Activated CD4-positive, alpha-beta T cell treated with anti-CD3 and anti-CD28 coated beads for 36 hours (primary cell): ENCODE measurements at regions of chr15 and their contacts with region 1.

Region 1: GRCh38 chr15:81106560-81106959 is 27.5 kb upstream of the CFAP161 start:
- DNase-seq: peak; percentile 59
- ATAC-seq: peak; percentile 57
- H3K4me3 Mint-ChIP-seq: no peak overlapping the region
- H3K27ac Mint-ChIP-seq: no peak overlapping the region
- H3K4me1 Mint-ChIP-seq: peaks cover 4% of the 10 kb centered on the region
- H3K27me3 Mint-ChIP-seq: peaks cover 18% of the 10 kb centered on the region

Region 2: DNA sequence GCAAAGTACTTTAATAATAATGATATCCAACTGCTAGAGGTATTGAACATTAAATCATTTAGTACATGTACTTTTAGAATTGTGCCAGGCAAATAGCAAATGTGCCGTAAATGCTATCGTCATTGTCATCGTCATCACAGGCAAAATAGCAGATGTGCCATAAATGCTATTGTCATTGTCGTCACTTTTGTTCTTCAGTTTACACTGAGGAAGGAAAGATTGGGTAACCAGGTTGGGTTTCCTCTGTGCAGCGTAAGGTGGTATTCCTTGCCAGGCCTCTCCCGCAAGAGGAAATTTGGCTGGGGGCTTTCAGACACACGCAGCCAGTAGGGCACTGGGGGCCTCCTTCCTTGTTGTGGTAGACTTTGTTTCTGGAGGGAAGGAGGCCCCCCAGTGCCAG is 385.1 kb before region 1 on chr15:
- CTCF ChIA-PET with region 1: no interaction called
- POLR2A ChIA-PET with region 1: no interaction called
- intact Hi-C with region 1: no loop called
- DNase-seq: no peak
- ATAC-seq: no peak
- H3K4me3 Mint-ChIP-seq: no peak overlapping the region
- H3K27ac Mint-ChIP-seq: no peak overlapping the region
- H3K4me1 Mint-ChIP-seq: no peaks in the 10 kb centered on the region
- H3K27me3 Mint-ChIP-seq: no peaks in the 10 kb centered on the region

Region 3: GRCh38 chr15:80977627-80978036 is 128.9 kb before region 1 on chr15:
- CTCF ChIA-PET with region 1: interaction called, 6 read pairs
- POLR2A ChIA-PET with region 1: no interaction called
- intact Hi-C with region 1: loop called in 1 of 2 experiments (anchors 1 kb)
- DNase-seq: peak; percentile 70
- ATAC-seq: peak; percentile 79
- H3K4me3 Mint-ChIP-seq: no peak overlapping the region
- H3K27ac Mint-ChIP-seq: peak overlapping the region; percentile 61
- H3K4me1 Mint-ChIP-seq: peaks cover 44% of the 10 kb centered on the region
- H3K27me3 Mint-ChIP-seq: no peaks in the 10 kb centered on the region

Region 4: GRCh38 chr15:81000624-81001151 is 105.9 kb before region 1 on chr15 and contains the start of gene TLNRD1:
- CTCF ChIA-PET with region 1: interaction called, 3 read pairs
- POLR2A ChIA-PET with region 1: no interaction called
- intact Hi-C with region 1: loop called (anchors 1 to 2 kb)
- DNase-seq: peak; percentile 90
- ATAC-seq: peak; percentile 70
- H3K4me3 Mint-ChIP-seq: peak within 1 kb of the TSS; percentile 92
- H3K27ac Mint-ChIP-seq: peak within 1 kb of the TSS; percentile 92
- H3K4me1 Mint-ChIP-seq: peaks cover 45% of the 10 kb centered on the region
- H3K27me3 Mint-ChIP-seq: no peaks in the 10 kb centered on the region
- total RNA-seq, gene TLNRD1: 11.2 to 16.9 TPM

Region 5: GRCh38 chr15:81117136-81117535 is 10.6 kb after region 1 on chr15:
- CTCF ChIA-PET with region 1: interaction called, 12 read pairs
- POLR2A ChIA-PET with region 1: no interaction called
- intact Hi-C with region 1: no loop called
- DNase-seq: no peak
- ATAC-seq: no peak
- H3K4me3 Mint-ChIP-seq: no peak overlapping the region
- H3K27ac Mint-ChIP-seq: no peak overlapping the region
- H3K4me1 Mint-ChIP-seq: no peaks in the 10 kb centered on the region
- H3K27me3 Mint-ChIP-seq: peaks cover 32% of the 10 kb centered on the region

Region 6: GRCh38 chr15:81336568-81336967 is 230.0 kb after region 1 on chr15:
- CTCF ChIA-PET with region 1: no interaction called
- POLR2A ChIA-PET with region 1: no interaction called
- intact Hi-C with region 1: loop called in 1 of 2 experiments (anchors 10 kb)
- DNase-seq: peak; percentile 52
- ATAC-seq: peak; percentile 51
- H3K4me3 Mint-ChIP-seq: no peak overlapping the region
- H3K27ac Mint-ChIP-seq: no peak overlapping the region
- H3K4me1 Mint-ChIP-seq: peaks cover 7% of the 10 kb centered on the region
- H3K27me3 Mint-ChIP-seq: no peaks in the 10 kb centered on the region

Region 7: GRCh38 chr15:81400640-81401236 is 294.2 kb after region 1 on chr15:
- CTCF ChIA-PET with region 1: interaction called, 5 read pairs
- POLR2A ChIA-PET with region 1: no interaction called
- intact Hi-C with region 1: loop called (anchors 2 to 5 kb)
- DNase-seq: no peak
- ATAC-seq: peak; percentile 44
- H3K4me3 Mint-ChIP-seq: no peak overlapping the region
- H3K27ac Mint-ChIP-seq: no peak overlapping the region
- H3K4me1 Mint-ChIP-seq: peaks cover 3% of the 10 kb centered on the region
- H3K27me3 Mint-ChIP-seq: no peaks in the 10 kb centered on the region

Region 8: DNA sequence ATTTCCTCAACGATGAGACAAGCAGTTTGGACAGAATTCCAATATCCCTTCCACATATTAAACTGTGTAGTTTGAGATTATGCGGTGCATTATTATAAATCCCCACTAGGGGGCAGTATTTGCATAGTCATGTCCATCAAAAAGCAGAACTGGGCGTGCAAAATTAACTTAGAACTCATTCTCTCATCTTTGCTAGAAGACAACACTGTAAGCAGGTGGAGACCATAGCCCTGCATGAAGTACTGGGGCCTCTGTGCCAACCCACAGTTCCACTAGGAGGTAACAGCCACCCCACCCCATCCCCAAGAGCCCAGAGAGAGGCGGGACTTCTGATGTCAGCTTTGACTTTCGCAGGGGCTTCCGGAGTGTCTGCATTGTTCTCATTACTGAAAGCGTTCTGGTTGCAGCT is 374.1 kb after region 1 on chr15:
- CTCF ChIA-PET with region 1: no interaction called
- POLR2A ChIA-PET with region 1: no interaction called
- intact Hi-C with region 1: no loop called
- DNase-seq: no peak
- ATAC-seq: peak; percentile 42
- H3K4me3 Mint-ChIP-seq: no peak overlapping the region
- H3K27ac Mint-ChIP-seq: no peak overlapping the region
- H3K4me1 Mint-ChIP-seq: no peaks in the 10 kb centered on the region
- H3K27me3 Mint-ChIP-seq: peaks cover 2% of the 10 kb centered on the region